Activated CD4-positive, alpha-beta T cell treated with anti-CD3 and anti-CD28 coated beads for 36 hours (primary cell): ENCODE measurements at regions of chr17 and their contacts with region 1.

Region 1: DNA sequence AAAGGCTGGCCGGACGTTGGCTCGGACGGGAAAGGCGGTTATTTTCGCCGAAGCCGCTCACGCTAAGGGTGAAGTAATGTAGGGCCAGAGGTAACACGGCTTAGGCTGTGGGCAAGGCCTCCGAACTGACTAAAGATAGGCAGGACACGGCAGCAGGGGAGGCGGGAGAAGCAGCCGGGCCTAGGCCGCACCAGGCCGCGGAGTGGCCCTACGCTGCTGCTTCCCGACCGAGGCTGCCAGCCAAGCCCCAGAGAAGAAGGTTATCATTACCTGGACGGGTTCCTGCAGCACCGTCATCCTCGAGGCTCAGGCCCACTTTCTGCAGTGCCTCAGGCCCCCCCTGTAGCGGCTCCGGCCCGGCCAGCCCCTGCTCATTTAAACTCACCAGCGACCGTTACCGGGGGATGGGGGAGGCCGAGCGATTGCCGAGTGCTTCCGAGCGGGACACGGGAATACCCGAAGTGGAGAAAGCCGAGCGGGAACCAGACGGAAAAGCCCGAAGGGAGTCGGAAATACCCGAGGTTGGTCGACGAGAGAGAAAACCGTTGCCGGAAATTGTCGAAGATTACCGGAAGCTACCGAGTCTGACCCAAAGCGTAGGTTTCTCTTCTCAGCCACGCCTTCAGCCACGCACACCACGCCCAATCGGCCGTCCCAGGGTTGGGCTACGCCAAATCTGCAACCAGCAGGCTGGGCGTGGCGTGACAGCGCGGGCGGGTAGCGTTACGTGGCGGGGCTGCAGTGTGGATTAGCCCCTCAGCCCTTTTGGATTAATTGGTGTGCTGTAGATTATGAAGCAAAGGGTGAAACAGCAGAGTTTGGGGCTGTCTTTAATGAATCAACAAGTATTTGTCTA is at the start of gene CDC27:
- DNase-seq: peak; percentile 100
- ATAC-seq: peak; percentile 97
- H3K4me3 Mint-ChIP-seq: peak within 1 kb of the TSS; percentile 95
- H3K27ac Mint-ChIP-seq: peak within 1 kb of the TSS; percentile 95
- H3K4me1 Mint-ChIP-seq: peaks cover 37% of the 10 kb centered on the region
- H3K27me3 Mint-ChIP-seq: no peaks in the 10 kb centered on the region
- total RNA-seq, gene CDC27: 123 to 166 TPM

Region 2: DNA sequence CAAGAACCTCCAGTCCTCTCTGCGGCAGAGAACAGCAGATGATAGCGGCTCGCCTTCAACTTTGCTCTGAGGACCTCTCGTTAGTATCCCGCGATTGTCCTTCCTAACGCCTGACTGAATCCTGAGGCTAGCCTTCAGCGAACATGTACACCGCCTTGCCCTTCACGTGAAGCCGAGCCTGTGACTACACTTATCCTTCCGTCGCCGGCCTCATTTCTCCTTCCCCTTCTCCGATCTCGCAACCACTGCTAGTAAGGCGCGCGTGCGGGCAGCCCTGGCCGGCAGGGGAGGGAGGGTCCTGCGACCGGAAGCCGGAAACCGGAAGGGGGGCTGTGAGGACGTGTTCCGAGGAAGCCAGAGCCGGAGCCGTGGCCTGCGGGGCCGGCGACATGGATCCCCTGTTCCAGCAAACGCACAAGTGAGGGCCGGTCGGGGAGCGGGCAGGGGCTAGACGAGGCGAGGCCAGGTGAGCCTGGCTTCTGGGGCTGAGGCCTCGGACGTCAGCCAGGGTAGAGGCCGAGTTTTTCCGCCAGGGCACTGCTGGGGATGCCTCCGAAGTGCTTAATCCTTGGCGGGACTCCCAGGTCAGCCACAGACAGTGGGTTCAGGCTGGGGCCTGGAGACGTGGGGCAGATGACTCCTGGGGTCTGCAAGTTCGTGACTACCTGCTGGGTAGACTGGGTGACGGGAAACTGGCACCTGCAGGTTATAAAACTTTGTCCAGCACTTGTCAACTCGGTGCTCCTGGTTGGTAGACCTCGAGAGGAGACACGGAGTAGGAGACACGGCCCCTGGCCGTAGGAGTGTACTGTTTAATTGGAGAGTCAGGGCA is 266.1 kb before region 1 on chr17 and contains the start of gene GOSR2:
- CTCF ChIA-PET with region 1: no interaction called
- POLR2A ChIA-PET with region 1: no interaction called
- intact Hi-C with region 1: loop called in 1 of 2 experiments (anchors 10 kb)
- DNase-seq: peak; percentile 94
- ATAC-seq: peak; percentile 96
- H3K4me3 Mint-ChIP-seq: peak within 1 kb of the TSS; percentile 81
- H3K27ac Mint-ChIP-seq: peak within 1 kb of the TSS; percentile 100
- H3K4me1 Mint-ChIP-seq: peaks cover 44% of the 10 kb centered on the region
- H3K27me3 Mint-ChIP-seq: no peaks in the 10 kb centered on the region
- total RNA-seq, gene GOSR2: 38.9 to 42.7 TPM

Region 3: DNA sequence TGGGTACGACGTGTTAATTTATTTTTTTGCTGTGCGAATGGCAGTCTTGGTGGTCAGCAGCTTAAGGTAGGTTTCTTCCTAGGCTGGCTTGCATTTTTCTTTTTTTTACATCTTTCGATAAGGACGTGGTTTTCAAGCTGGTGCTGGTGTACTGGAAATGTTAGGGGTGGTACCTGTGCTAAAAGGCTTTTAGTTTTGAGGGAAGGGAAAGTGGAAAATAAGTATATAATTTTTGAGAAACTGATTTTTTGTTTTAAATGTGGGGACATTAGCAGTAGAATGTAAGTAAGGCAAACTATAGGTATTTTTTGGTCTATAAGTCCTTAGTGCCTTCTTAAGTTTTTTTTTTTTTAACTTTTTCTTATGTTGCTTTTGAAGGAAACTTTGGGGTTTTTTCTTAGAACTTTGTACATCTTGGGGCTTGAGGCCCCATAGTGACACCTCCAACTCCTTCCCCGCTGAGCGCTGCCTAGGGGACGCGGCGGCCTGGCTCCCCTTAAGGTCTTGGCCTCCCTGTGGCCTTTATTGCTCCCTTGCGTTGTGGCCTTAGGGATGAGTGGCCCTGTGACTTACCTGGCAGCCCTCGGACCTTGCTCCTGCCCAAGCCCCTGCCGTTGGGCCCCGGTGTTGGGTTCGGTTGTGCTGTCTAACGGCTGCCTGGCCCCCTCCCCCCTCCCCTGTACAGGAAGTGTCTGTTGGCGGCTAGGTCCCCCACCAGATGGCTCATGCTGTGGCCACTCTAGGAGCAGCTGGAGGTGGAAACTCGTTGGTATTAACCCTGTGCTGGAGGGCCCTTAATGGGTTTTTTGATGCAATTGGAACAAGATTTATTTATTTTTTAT is 122.0 kb before region 1 on chr17:
- CTCF ChIA-PET with region 1: no interaction called
- POLR2A ChIA-PET with region 1: no interaction called
- intact Hi-C with region 1: loop called in 1 of 2 experiments (anchors 5 kb)
- DNase-seq: peak; percentile 90
- ATAC-seq: peak; percentile 96
- H3K4me3 Mint-ChIP-seq: peak overlapping the region; percentile 83
- H3K27ac Mint-ChIP-seq: peak overlapping the region; percentile 95
- H3K4me1 Mint-ChIP-seq: peaks cover 30% of the 10 kb centered on the region
- H3K27me3 Mint-ChIP-seq: no peaks in the 10 kb centered on the region

Region 4: DNA sequence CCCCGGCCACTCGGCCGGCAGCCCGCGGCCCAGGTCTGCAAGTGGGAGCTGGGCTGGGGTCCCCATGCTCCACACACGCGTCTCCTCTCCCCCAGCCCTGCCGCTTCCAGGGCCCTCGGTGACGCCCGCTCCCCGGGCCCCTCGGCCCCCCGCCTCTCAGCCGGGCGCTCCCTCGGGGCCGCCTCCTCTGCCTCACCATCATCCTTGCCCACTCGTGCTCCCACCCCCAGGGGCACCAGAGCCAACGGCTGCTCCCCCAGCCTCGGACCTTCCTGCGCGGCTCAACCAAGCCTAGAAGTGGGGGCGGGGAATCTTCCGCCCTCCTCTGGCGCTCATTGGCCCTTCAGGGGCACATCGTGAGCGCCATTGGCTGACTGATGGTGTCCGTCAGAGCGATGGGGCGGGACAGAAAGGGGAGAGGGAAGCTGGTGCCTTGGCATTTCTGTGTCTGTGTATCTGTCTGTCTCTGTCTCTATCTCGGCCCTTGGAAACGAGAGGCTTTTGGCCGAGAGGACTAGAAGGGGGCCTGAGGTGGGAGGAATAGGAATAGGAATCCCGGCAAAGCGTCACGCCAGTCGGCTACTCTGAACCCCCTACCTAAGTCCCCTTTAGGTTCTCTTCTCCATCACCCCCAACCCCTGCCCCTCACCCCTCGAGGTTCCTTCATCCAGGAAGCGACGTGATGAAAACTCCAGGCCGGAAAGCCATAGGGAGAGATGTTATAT is 89.0 kb before region 1 on chr17:
- CTCF ChIA-PET with region 1: no interaction called
- POLR2A ChIA-PET with region 1: no interaction called
- intact Hi-C with region 1: loop called in 1 of 2 experiments (anchors 1 kb)
- DNase-seq: peak; percentile 95
- ATAC-seq: peak; percentile 100
- H3K4me3 Mint-ChIP-seq: peak overlapping the region; percentile 87
- H3K27ac Mint-ChIP-seq: peak overlapping the region; percentile 97
- H3K4me1 Mint-ChIP-seq: peaks cover 19% of the 10 kb centered on the region
- H3K27me3 Mint-ChIP-seq: no peaks in the 10 kb centered on the region

Region 5: GRCh38 chr17:47205419-47205963 is 16.4 kb after region 1 on chr17:
- CTCF ChIA-PET with region 1: interaction called, 12 read pairs
- POLR2A ChIA-PET with region 1: interaction called, 4 read pairs
- intact Hi-C with region 1: loop called (anchors 1 kb)
- DNase-seq: peak; percentile 82
- ATAC-seq: peak; percentile 67
- H3K4me3 Mint-ChIP-seq: peak overlapping the region; percentile 59
- H3K27ac Mint-ChIP-seq: peak overlapping the region; percentile 90
- H3K4me1 Mint-ChIP-seq: peaks cover 46% of the 10 kb centered on the region
- H3K27me3 Mint-ChIP-seq: no peaks in the 10 kb centered on the region

Region 6: DNA sequence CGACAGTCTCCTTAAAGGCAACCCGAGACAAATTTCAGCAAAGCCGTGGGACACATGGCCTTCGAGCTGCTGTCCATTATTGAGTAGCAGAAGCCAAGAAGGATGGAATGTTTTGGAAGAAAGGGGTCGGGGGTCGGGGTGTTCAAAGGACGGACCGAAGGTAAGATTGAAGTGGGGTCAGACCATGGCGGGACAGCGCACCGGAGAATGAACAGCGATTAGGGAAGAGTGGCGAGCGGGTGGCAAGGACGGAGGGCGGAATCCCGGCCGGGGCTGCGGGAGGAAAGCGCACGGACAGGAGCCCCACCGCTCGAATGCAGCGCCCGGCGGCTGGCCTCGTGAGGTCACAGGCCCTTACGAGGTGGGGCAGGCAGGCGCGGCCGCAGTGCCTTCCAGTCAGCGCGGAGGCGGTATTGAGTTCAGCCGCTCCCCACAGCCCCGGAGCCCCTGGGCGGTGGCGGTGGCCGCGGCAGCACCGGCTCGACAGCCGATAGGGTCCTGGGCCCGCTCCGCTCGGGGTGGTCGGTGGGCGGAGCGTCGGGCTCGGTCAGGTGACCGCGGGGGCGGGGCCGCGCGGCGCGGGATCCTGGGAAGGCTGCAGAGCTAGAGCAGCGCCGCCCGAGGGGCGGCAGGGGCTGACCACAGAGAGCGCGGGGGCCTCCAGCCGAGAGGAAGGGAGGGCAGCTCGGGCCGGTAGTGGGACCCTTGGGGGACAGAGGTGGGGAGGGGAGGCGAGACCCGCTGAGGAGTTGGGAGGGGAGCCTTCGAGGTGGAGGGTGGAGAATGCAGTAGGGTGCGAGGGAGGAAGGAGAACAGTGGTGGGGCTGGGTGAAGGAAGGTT is 134.5 kb after region 1 on chr17 and contains the start of gene EFCAB13:
- CTCF ChIA-PET with region 1: interaction called, 4 read pairs
- POLR2A ChIA-PET with region 1: no interaction called
- intact Hi-C with region 1: loop called in 1 of 2 experiments (anchors 1 kb)
- DNase-seq: peak; percentile 86
- ATAC-seq: peak; percentile 84
- H3K4me3 Mint-ChIP-seq: peak within 1 kb of the TSS; percentile 85
- H3K27ac Mint-ChIP-seq: peak within 1 kb of the TSS; percentile 91
- H3K4me1 Mint-ChIP-seq: peaks cover 18% of the 10 kb centered on the region
- H3K27me3 Mint-ChIP-seq: peaks cover 10% of the 10 kb centered on the region
- total RNA-seq, gene EFCAB13: 4.6 to 5.9 TPM

Region 7: DNA sequence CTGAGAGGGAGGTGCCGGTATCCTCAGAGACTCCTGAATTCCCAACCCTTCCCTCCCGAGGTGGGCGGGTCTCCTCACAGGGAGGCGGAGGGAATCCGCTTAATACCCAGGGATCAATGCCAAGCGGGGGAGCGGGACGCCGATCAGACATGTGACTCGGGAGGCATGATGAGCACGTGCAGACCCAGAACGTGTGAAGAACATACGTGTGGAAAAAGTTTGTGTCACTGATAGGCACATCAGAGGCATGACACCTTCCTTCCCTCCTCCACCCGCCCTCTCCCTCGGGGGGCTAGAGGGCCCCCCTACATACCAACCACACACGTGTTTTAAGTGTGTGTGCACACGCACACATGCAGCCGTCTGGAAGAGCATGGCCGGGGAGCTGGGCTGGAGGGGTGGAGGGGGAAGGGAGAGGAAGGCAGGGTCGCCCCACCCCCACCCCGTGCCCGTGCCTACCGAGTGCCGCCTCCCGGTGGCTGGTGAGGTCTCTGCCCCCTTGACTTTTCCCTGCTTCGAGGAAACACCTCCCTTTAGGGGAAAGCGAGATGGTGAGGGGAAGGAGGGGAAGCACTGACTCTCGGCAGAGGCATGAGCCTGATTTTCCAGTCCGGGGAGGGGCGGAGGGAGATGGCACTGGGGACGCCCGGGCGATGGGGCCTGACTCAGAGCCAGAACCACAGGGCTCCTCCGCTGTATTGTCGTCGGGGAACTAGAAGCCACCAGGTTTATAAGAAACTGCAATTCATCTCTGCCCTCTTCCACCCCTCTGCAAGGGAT is 531.8 kb after region 1 on chr17:
- CTCF ChIA-PET with region 1: no interaction called
- POLR2A ChIA-PET with region 1: no interaction called
- intact Hi-C with region 1: loop called in 1 of 2 experiments (anchors 5 kb)
- DNase-seq: peak; percentile 99
- ATAC-seq: peak; percentile 71
- H3K4me3 Mint-ChIP-seq: peak overlapping the region; percentile 69
- H3K27ac Mint-ChIP-seq: peak overlapping the region; percentile 98
- H3K4me1 Mint-ChIP-seq: peaks cover 97% of the 10 kb centered on the region
- H3K27me3 Mint-ChIP-seq: no peaks in the 10 kb centered on the region